CD8-positive, alpha-beta T cell (primary cell): ENCODE measurements at regions of chr10 and their contacts with region 1.

Region 1: DNA sequence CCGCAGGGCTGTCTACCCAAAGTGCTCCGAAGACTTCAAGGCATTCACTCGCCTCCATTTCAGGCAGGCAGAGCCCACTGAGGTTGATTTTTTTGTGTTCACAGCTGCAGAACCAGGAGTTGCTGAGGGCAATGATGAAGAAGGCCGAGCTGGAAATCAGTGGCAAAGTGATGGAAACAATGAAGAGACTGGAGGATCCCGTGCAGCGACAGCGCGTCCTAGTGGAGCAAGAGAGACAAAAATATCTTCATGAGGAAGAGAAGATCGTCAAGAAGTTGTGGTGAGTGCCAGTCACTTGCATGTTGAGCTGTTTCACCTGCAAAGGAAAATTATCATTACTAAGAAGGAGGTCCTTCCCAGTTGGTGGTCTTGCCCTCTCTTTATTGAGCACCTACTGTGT is 210.5 kb downstream of the ARHGAP21 start:
- DNase-seq: no peak
- ATAC-seq: no peak
- H3K4me3 ChIP-seq: no peak overlapping the region
- H3K4me3 Mint-ChIP-seq: no peak overlapping the region
- H3K27ac ChIP-seq: no peak overlapping the region
- H3K27ac Mint-ChIP-seq: no peak overlapping the region
- H3K4me1 ChIP-seq: no peaks in the 10 kb centered on the region
- H3K4me1 Mint-ChIP-seq: no peaks in the 10 kb centered on the region
- H3K27me3 ChIP-seq: no peaks in the 10 kb centered on the region
- H3K27me3 Mint-ChIP-seq: peaks cover 7% of the 10 kb centered on the region
- CTCF ChIP-seq: no peak

Region 2: GRCh38 chr10:24463611-24464426 is 49.3 kb before region 1 on chr10:
- CTCF ChIA-PET with region 1: no interaction called
- POLR2A ChIA-PET with region 1: no interaction called
- intact Hi-C with region 1: loop called in 1 of 2 experiments (anchors 5 kb)
- DNase-seq: peak in 1 of 9 experiments; percentile 28
- ATAC-seq: no peak
- H3K4me3 ChIP-seq: peak overlapping the region in 1 of 2 experiments; percentile 7
- H3K4me3 Mint-ChIP-seq: peak overlapping the region; percentile 9
- H3K27ac ChIP-seq: peak overlapping the region in 1 of 2 experiments; percentile 11
- H3K27ac Mint-ChIP-seq: peak overlapping the region; percentile 33
- H3K4me1 ChIP-seq: no peaks in the 10 kb centered on the region
- H3K4me1 Mint-ChIP-seq: peaks cover 7% of the 10 kb centered on the region
- H3K27me3 ChIP-seq: no peaks in the 10 kb centered on the region
- H3K27me3 Mint-ChIP-seq: peaks cover 3% of the 10 kb centered on the region
- CTCF ChIP-seq: no peak